ENCODE measurements at regions of chr17 and their contacts with region 1.

Region 1: DNA sequence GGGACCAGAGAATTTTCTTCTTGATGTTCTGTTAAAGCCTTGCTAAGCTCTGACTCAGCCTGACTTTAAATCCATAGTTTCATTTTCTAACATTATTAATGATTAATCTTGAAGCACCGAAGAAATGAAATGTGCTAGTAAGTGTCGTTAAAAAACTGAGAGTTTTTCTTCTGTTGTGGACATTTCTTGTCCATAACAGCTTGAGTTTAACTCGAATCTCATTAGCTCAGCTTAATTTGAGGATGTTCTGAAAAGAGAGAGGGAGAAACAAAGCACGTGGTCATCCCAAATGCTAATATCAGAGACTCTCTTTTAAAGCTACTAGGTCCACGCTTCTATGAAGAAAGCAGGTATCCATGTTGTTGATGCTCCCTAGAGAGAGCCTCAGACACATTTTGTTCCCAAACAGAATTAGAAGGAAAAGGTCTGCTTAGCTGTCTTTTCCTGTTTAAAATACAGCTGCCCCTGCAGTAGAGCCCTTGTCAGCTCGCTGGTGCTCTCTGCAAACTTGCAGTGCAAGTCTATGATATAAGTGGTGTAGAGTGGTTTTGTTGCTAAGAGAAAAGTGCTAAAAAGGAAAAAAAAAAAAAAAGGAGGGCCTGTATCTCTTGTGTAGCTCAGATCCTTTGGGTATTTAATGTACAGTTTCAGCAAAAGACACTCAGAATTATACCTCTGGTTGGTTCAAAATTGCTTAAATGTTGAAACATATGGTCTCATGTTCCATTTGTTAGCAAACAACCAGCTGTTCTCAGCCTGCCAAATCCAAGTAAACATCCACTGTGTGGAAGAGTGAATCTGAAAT is 191.1 kb upstream of the TBX2 start:
- DNase-seq: no peak
- H3K4me3 ChIP-seq: no peak overlapping the region; a peak in 1 of 4 replicates
- H3K27ac ChIP-seq: peak overlapping the region; percentile 3 to 43; a peak in 2 of 4 replicates
- H3K4me1 ChIP-seq: peaks cover 0 to 22% of the 10 kb centered on the region in 2 experiments; a peak in 2 of 4 replicates
- H3K27me3 ChIP-seq: no peaks in the 10 kb centered on the region
- CTCF ChIP-seq: no peak
- EP300 ChIP-seq: no peak
- RAD21 ChIP-seq: no peak

Region 2: GRCh38 chr17:61002316-61002736 is 206.2 kb before region 1 on chr17:
- CTCF ChIA-PET with region 1: no interaction called
- POLR2A ChIA-PET with region 1: no interaction called
- DNase-seq: peak; percentile 55
- H3K4me3 ChIP-seq: no peak overlapping the region
- H3K27ac ChIP-seq: peak overlapping the region; percentile 46 to 78; a peak in 3 of 4 replicates
- H3K4me1 ChIP-seq: peaks cover 3 to 7% of the 10 kb centered on the region in 2 experiments; a peak in 1 of 4 replicates
- H3K27me3 ChIP-seq: no peaks in the 10 kb centered on the region
- CTCF ChIP-seq: peak; percentile 92
- EP300 ChIP-seq: peak; percentile 52 to 64; a peak in 2 of 4 replicates
- RAD21 ChIP-seq: peak; percentile 98

Region 3: DNA sequence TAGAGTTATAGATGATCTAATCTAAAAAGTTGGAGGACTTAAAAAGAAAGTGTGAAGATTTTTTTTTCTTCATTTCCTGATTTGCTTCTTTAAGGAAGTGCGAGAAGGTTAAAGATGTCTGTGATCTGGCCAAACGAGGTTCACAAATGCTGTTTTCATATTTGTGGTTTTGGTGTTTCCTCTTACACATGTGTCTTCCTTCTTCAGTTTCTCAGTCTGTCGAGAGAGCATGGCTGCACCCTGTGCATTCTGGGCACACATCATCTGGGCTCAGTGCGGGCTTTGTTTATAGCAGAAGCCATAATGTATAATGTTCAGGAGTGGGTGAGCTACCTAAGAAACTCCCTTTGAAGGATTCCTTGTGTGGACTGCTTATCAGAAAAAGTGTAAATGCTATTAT is 69.3 kb before region 1 on chr17:
- CTCF ChIA-PET with region 1: no interaction called
- POLR2A ChIA-PET with region 1: no interaction called
- DNase-seq: no peak
- H3K4me3 ChIP-seq: peak overlapping the region in 1 of 2 experiments; percentile 1; a peak in 1 of 4 replicates
- H3K27ac ChIP-seq: peak overlapping the region; percentile 58 to 80
- H3K4me1 ChIP-seq: peaks cover 33 to 41% of the 10 kb centered on the region in 2 experiments
- H3K27me3 ChIP-seq: no peaks in the 10 kb centered on the region
- CTCF ChIP-seq: no peak
- EP300 ChIP-seq: peak in 1 of 2 experiments; percentile 76; a peak in 2 of 4 replicates
- RAD21 ChIP-seq: no peak; the same call in 1 of the 2 replicates

Region 4: GRCh38 chr17:61196799-61197198 is 11.7 kb before region 1 on chr17:
- CTCF ChIA-PET with region 1: interaction called, 10 read pairs
- POLR2A ChIA-PET with region 1: no interaction called
- DNase-seq: no peak
- H3K4me3 ChIP-seq: peak overlapping the region in 1 of 2 experiments; percentile 13; a peak in 1 of 4 replicates
- H3K27ac ChIP-seq: peak overlapping the region in 1 of 2 experiments; percentile 91; a peak in 2 of 4 replicates
- H3K4me1 ChIP-seq: peaks cover 18 to 22% of the 10 kb centered on the region in 2 experiments; a peak in 3 of 4 replicates
- H3K27me3 ChIP-seq: no peaks in the 10 kb centered on the region
- CTCF ChIP-seq: no peak
- EP300 ChIP-seq: no peak
- RAD21 ChIP-seq: no peak

Region 5: DNA sequence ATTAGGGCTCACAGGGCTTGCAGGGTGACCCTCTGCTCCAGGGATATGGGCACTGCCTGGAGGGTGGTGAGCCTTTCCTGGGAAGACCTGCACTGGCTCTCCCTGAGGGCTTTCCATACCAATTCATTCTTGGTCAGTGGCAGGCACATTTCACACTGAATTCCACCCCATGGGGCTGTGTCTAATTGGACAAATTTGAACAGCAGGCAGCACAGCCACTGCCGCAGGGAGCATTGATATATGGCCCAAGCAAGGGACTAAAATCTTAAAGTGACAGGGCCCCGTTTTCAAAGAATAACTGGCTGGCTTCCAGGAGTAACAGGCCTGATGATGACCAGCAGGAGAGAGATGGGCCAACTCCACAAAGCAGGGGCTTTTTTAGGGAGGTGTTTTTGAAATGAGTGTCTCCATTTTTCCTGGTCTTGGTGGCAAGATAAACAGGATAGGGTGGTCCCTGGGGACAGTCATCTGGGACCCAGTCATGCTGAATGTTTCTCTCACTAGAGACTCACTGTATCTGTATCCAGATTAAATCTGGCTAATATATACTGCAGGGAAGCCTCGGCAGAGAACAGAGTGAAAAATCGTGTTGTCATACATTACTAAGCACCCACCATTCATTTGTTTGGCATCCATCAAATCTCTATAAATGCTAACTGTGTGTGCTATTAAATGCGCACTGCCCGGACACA is 117.0 kb after region 1 on chr17:
- CTCF ChIA-PET with region 1: no interaction called
- POLR2A ChIA-PET with region 1: no interaction called
- DNase-seq: peak; percentile 78
- H3K4me3 ChIP-seq: 0 out of 4 replicates have a peak overlapping the region, but pooled peaks of 1 of the 2 experiments have one; percentile 4
- H3K27ac ChIP-seq: peak overlapping the region; percentile 75 to 86
- H3K4me1 ChIP-seq: peaks cover 25 to 38% of the 10 kb centered on the region in 2 experiments
- H3K27me3 ChIP-seq: no peaks in the 10 kb centered on the region
- CTCF ChIP-seq: no peak; the same call in 1 of the 2 replicates
- EP300 ChIP-seq: peak; percentile 42 to 78
- RAD21 ChIP-seq: peak; percentile 16; the same call in 1 of the 2 replicates